ENCODE measurements at regions of chr3 and their contacts with region 1.

Region 1: DNA sequence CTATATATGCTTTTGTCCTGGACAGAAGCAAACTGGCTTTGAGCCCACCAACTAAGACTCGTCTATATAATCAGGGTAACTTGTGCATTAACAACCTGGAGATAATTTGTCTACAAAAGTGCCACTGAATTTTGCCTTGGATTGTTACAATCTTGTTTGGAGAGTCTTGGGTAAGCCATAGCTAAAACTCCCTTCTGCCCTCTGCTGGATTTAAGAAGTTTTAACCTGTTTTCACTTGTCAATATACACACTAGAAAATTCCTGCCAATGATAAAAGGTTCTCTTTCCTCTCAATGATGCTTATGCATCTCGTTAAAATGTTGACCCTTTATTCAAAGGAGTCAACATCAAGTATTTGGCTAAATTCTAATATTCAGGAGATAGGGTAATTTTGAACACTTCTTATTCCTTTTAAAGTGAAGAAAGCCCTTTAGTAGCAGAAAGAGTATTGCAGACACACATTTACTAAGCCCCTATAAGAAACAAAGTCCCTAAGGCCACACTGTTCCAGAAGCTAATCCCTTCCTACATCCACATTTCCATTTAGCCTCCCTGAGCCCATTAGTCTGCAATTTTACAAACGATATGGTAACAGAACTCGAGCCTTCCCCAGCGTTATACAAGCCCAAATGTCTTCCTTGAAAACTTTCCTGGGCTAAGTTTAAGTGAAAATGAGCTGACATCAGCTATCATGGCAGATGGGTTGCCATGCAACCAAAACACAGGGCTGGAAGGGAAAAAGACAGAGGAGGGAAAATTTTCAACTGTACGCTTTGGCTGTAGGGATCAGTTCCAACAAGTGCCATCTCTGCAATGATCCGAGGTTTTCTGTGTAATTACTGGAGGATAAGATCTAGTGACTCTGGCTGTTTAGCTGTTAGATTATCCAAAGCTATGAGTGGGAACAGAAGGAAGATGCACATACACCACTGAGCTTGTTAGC is 75.9 kb upstream of the FGF12 start:
- DNase-seq: peak; percentile 33
- CTCF ChIP-seq: peak; percentile 42

Region 2: GRCh38 chr3:192816351-192816750 is 13.1 kb after region 1 on chr3:
- CTCF ChIA-PET with region 1: interaction called, 108 read pairs
- POLR2A ChIA-PET with region 1: no interaction called
- DNase-seq: no peak
- CTCF ChIP-seq: peak; percentile 38

Measured in GM10248 (cell line).